ENCODE measurements at regions of chr18 and their contacts with region 1.

Region 1: GRCh38 chr18:6590326-6590725 is 139.2 kb upstream of the ARHGAP28 start:
- DNase-seq: peak; percentile 72
- H3K4me3 ChIP-seq: no peak overlapping the region
- H3K27ac ChIP-seq: no peak overlapping the region
- H3K4me1 ChIP-seq: peaks cover 2% of the 10 kb centered on the region
- H3K27me3 ChIP-seq: no peaks in the 10 kb centered on the region
- CTCF ChIP-seq: no peak
- POLR2A ChIP-seq: no peak

Region 2: DNA sequence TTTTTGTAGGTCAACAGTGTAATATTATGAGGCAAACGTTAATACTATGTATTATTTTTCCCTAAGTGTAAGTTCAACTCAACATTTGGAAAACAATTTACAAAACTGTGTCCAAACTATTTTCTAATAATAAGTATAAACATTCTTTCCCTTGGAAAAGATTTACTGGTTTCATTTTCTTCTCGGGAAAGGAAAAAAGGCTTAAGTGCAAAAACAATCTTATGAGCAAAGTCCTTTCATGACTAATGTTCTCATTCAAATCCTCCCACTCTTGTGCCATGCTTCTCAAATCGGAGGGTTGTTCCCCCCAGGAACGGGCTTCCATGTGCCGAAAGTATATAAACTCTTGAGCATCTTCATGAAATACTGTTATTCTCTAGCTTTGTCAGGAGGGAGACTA is 155.8 kb before region 1 on chr18:
- intact Hi-C with region 1: no loop called
- DNase-seq: no peak
- H3K4me3 ChIP-seq: no peak overlapping the region
- H3K27ac ChIP-seq: peak overlapping the region; percentile 1 to 67
- H3K4me1 ChIP-seq: peaks cover 20% of the 10 kb centered on the region
- H3K27me3 ChIP-seq: no peaks in the 10 kb centered on the region
- CTCF ChIP-seq: no peak
- POLR2A ChIP-seq: no peak

Region 3: DNA sequence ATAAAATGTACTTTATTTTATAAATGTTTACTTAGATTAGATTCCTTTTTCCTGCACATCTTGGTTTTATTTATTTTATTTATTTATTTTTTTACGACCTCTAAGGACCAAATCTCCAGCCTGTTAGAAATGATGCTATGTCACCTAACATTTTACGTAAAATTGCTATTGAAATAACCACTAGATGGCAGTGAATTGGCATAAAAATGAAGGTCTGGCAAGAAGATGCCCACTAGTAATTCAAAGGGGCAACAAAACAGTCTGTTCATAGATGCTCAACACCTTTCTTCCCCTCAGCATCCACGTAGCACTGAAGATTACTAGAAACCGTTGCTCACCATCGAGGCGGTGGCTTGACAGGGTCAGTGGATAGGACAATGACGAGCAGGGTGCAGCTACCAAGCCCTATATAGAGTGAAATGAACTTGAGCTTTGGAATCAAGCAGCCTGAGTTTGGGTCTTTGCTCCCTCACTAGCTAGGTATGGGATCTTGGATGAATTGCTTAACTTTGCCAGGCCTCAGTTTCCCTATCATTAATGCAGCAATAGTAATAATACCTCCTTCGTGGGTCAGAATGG is 46.9 kb before region 1 on chr18:
- intact Hi-C with region 1: loop called (anchors 2 kb)
- DNase-seq: no peak
- H3K4me3 ChIP-seq: no peak overlapping the region
- H3K27ac ChIP-seq: no peak overlapping the region
- H3K4me1 ChIP-seq: peaks cover 13% of the 10 kb centered on the region
- H3K27me3 ChIP-seq: no peaks in the 10 kb centered on the region
- CTCF ChIP-seq: peak; percentile 26 to 64 (median 58)
- POLR2A ChIP-seq: no peak